Cardiac septum (tissue), 1 donor: ENCODE measurements at regions of chr20 and their contacts with region 1.

Region 1: GRCh38 chr20:17536944-17537444 is 5.8 kb upstream of the BFSP1 start:
- DNase-seq: no peak

Region 2: DNA sequence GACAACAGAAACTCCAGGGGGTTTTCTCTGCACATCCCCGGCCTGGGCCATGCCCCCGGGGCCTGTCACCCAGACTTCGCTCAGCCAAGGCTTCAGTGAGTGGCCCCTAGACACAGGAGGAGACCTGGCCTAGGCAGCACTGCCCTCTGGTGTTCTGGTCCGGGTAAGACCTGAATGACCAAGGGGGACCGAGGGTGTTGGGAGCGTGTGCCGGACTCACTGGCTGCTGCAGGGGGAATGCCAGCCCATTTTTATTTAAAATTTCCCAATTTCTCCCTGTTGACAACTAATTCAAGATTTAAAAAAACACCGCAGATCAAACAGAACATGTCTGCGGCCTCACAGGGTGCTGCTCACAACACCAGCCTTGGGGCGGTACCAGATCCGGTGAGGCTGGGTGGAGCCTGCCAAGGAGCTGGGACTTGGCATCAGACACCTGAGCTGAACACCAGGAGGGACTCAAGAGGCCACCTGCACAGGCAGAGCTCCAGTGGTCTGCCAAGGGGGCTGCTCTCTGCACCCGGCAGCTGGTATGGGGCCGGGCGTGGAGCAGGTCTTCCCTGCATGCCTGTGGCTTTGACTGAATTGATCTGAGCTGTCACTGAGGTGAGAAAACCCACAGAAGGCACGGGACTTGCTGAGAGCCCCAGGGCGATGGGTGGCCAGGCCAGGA is 80.7 kb after region 1 on chr20:
- intact Hi-C with region 1: loop called (anchors 1 kb)
- DNase-seq: peak; percentile 82

Region 3: DNA sequence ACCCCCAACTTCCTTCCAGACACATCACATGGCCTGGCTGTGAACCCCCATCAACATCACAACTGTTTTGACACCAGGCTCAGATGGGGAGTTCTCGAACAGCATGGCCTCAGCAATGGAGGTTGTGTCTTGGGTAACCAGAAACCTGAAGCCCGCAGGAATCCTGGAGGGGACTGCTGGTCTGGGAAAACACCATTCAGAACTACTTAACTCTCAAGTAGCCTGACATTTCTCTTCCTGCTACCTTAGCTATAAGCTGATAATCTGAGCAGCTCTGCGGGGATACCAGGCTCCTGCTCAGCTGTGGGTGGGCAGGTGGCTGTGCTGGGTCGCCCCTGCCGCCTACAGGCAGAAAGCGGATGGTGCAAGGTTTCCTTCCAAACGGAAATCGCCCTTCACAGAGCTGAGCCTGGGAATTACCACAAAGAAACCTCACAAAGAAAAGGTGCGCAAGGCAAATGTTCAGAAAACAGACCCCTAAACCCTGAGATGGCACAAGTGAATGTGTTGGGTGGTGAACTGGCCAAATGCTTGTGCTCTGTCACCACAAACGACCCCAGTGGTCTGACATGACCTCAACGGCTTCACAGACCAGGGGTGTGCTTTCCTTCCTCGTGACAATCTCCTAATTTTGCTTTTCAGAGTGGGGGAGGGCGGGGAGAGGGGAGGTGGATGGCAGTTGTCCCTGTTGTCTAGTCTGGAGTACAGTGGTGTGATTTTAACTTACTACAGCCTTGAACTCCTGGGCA is 402.1 kb after region 1 on chr20:
- intact Hi-C with region 1: loop called (anchors 10 kb)
- DNase-seq: no peak

Region 4: GRCh38 chr20:17995967-17996819 is 459.2 kb after region 1 on chr20:
- intact Hi-C with region 1: loop called (anchors 10 kb)
- DNase-seq: no peak